ENCODE measurements at regions of chr17 and their contacts with region 1.

Region 1: GRCh38 chr17:79393358-79394202 is 217.3 kb downstream of the RBFOX3 start:
- DNase-seq: peak; percentile 43
- H3K4me3 Mint-ChIP-seq: no peak overlapping the region
- H3K27ac Mint-ChIP-seq: no peak overlapping the region
- H3K4me1 Mint-ChIP-seq: no peaks in the 10 kb centered on the region
- H3K27me3 Mint-ChIP-seq: peaks cover 8% of the 10 kb centered on the region

Region 2: GRCh38 chr17:79019632-79020584 is 373.7 kb before region 1 on chr17:
- intact Hi-C with region 1: loop called (anchors 1 kb)
- DNase-seq: no peak
- H3K4me3 Mint-ChIP-seq: no peak overlapping the region
- H3K27ac Mint-ChIP-seq: no peak overlapping the region
- H3K4me1 Mint-ChIP-seq: peaks cover 4% of the 10 kb centered on the region
- H3K27me3 Mint-ChIP-seq: peaks cover 45% of the 10 kb centered on the region

Region 3: GRCh38 chr17:79045842-79046196 is 347.8 kb before region 1 on chr17:
- intact Hi-C with region 1: loop called (anchors 1 kb)
- DNase-seq: peak; percentile 41
- H3K4me3 Mint-ChIP-seq: no peak overlapping the region
- H3K27ac Mint-ChIP-seq: no peak overlapping the region
- H3K4me1 Mint-ChIP-seq: no peaks in the 10 kb centered on the region
- H3K27me3 Mint-ChIP-seq: no peaks in the 10 kb centered on the region

Region 4: DNA sequence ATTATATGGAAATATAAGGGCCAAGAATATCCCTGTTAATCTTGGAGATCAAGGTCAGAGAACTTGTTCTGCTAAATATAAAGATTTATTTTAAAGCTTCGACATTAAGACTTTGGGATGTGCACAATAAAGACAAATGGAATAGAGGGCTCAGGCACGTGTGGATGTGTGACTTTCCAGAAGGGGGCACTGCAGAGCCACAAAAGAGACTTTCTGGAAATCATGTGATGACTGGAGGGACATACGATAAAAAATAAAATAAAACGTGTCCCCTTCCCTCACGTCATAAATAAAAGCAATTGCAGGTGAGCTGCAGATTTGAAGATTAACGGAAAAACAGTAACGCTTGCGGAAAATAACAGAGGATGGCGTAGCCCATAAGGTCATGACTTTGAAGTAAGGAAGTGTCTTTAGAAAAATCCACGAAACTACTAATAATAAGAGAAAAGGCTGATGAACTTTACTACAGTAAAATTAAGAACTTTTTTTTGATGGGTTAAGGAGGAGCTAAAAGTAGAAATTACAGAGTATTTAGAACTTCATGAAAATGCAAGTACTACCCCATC is 328.4 kb before region 1 on chr17:
- intact Hi-C with region 1: loop called (anchors 1 kb)
- DNase-seq: peak; percentile 28
- H3K4me3 Mint-ChIP-seq: no peak overlapping the region
- H3K27ac Mint-ChIP-seq: no peak overlapping the region
- H3K4me1 Mint-ChIP-seq: peaks cover 5% of the 10 kb centered on the region
- H3K27me3 Mint-ChIP-seq: peaks cover 9% of the 10 kb centered on the region

Region 5: DNA sequence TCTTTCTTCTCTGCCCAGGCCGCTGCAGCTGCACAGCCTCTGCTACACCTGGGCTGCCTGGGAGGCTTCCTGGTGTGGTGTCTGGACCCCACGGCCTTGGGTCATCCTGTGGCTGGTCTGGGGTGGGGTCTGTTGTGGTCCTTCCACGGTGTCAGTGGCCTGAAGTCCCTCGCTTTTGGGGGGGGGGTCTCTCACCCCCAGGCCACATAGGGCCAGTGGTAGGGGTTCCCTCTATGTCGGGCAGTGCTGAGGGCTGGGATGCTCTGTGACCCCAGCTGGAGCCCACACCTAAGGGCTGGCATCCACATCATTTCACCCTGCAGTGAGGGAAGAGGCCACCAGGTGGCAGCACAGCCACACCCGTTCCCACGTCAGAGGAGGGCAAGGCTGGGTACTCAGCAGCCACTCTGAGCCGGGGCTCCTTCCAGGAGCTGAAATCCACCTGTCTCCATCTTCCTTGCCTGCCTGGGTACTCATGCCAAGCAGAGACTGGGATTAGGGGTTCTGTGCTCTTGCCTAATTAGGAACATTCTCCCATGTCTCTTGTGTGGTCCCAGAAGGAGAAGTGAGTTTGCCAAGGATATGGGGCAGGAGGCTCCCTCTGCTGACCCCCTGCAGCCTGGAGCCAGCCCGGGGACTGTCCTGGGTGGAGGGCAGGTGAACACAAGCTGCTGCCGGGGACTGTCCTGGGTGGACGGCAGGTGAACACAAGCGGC is 306.0 kb before region 1 on chr17:
- intact Hi-C with region 1: loop called (anchors 1 kb)
- DNase-seq: peak; percentile 53
- H3K4me3 Mint-ChIP-seq: no peak overlapping the region
- H3K27ac Mint-ChIP-seq: no peak overlapping the region
- H3K4me1 Mint-ChIP-seq: no peaks in the 10 kb centered on the region
- H3K27me3 Mint-ChIP-seq: peaks cover 2% of the 10 kb centered on the region

Region 6: GRCh38 chr17:79188048-79188447 is 205.5 kb before region 1 on chr17:
- intact Hi-C with region 1: loop called (anchors 10 kb)
- DNase-seq: no peak
- H3K4me3 Mint-ChIP-seq: no peak overlapping the region
- H3K27ac Mint-ChIP-seq: no peak overlapping the region
- H3K4me1 Mint-ChIP-seq: no peaks in the 10 kb centered on the region
- H3K27me3 Mint-ChIP-seq: peaks cover 18% of the 10 kb centered on the region

Region 7: GRCh38 chr17:79504181-79504605 is 110.6 kb after region 1 on chr17:
- intact Hi-C with region 1: no loop called
- DNase-seq: no peak
- H3K4me3 Mint-ChIP-seq: no peak overlapping the region
- H3K27ac Mint-ChIP-seq: no peak overlapping the region
- H3K4me1 Mint-ChIP-seq: no peaks in the 10 kb centered on the region
- H3K27me3 Mint-ChIP-seq: no peaks in the 10 kb centered on the region

Region 8: DNA sequence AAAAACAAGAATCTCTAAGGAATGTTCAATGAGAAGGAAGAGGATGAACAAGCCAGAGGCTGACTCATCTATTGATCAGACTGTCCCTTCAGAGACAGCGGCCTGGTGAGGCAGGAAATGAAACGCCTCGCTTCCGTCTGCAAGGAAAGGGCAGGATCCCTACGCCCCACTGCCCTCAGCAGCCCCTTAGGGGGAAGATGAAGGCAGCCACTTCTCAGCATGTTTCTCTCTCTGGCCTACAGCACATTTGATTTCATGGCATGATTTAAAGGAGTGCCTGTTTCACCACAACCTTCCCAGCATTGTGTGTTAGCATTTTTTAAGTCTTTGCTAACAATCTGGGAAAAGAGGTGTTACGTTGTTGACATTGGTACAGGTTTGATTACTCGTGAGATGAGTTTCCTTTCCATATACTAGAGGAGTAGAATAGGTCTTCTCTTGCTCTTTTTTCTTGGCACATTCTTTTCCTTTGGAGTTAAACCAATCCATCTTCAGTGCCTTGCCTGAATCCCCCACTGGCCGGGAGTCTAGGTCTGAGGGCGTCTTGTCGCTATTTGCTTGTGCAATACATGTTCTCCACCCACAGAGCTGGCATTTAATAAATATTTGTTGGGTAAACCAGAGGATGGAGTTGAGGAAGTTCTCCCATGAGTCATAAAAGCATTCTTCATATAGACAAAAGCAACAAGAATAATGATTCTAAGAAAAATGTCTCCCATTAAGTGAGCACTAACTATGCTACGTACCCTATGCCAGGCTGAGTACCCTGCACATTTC is 169.8 kb after region 1 on chr17:
- intact Hi-C with region 1: no loop called
- DNase-seq: no peak
- H3K4me3 Mint-ChIP-seq: no peak overlapping the region
- H3K27ac Mint-ChIP-seq: no peak overlapping the region
- H3K4me1 Mint-ChIP-seq: no peaks in the 10 kb centered on the region
- H3K27me3 Mint-ChIP-seq: peaks cover 2% of the 10 kb centered on the region

Measured in activated T-helper 1 cell treated with anti-CD3 and anti-CD28 coated beads, Interleukin-12 subunit alpha, Interleukin-12 subunit beta, Interleukin-2, Interleukin-4 antibody, amounts not matched to agents 30 ng/mL and 10 ng/mL and 1 ng/mL, durations not matched to agents 14 hours and 24 hours and 36 hours (primary cell).